CD4-positive, alpha-beta T cell (primary cell): ENCODE measurements at regions of chr11 and their contacts with region 1.

Region 1: DNA sequence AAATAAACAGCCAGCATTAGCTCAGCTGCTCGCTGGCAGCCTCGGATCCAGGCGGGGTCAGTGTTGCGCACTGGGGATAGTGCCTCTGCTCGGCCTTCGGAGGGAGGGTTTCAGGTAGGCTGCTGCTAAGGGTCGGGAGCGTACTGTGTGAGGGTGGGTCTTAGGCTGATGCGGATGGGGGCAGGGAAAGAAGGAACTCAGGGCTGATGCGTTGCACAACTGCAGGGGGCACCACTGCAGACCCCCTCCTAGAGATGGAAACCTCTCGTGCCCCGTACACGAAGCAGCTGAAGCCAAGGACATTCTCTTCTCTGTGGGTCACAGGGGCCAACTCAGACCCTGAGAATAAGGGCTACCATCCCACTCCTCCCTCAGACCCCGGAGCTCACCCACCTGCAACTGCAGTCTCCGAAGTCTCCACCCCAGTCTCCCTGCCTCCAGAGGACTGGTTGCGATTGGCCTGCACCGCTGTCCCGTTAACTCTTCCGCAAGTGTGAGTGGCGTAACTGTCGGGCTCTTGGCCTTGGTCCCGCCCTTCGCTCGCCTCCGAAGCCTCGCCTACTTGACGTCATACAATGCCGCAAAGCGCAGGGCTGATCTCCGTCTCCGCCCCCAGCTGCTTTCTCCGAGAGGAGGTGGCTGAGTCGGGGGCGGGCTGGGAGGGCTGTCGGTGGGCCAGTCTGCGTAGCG is at the start of gene KBTBD3:
- DNase-seq: peak; percentile 95 to 100 (median 98)
- ATAC-seq: peak; percentile 91
- H3K4me3 ChIP-seq: peak within 1 kb of the TSS; percentile 70
- H3K4me3 Mint-ChIP-seq: peak within 1 kb of the TSS; percentile 94
- H3K27ac ChIP-seq: peak within 1 kb of the TSS; percentile 82 to 94
- H3K27ac Mint-ChIP-seq: peak within 1 kb of the TSS; percentile 92
- H3K4me1 ChIP-seq: peaks cover 15% of the 10 kb centered on the region
- H3K4me1 Mint-ChIP-seq: peaks cover 73% of the 10 kb centered on the region
- H3K27me3 ChIP-seq: no peaks in the 10 kb centered on the region
- H3K27me3 Mint-ChIP-seq: no peaks in the 10 kb centered on the region
- CTCF ChIP-seq: peak; percentile 66
- total RNA-seq, gene KBTBD3: 5.7 to 8.1 TPM

Region 2: GRCh38 chr11:106021967-106022794 is 54.9 kb before region 1 on chr11 and contains the start of gene MSANTD4:
- CTCF ChIA-PET with region 1: interaction called, 3 read pairs
- POLR2A ChIA-PET with region 1: interaction called, 5 read pairs
- intact Hi-C with region 1: loop called (anchors 1 to 2 kb)
- DNase-seq: peak; percentile 91 to 98 (median 95)
- ATAC-seq: peak; percentile 96
- H3K4me3 ChIP-seq: peak within 1 kb of the TSS; percentile 85
- H3K4me3 Mint-ChIP-seq: peak within 1 kb of the TSS; percentile 94
- H3K27ac ChIP-seq: peak within 1 kb of the TSS; percentile 3 to 42
- H3K27ac Mint-ChIP-seq: peak within 1 kb of the TSS; percentile 71
- H3K4me1 ChIP-seq: peaks cover 7% of the 10 kb centered on the region
- H3K4me1 Mint-ChIP-seq: peaks cover 49% of the 10 kb centered on the region
- H3K27me3 ChIP-seq: no peaks in the 10 kb centered on the region
- H3K27me3 Mint-ChIP-seq: peaks cover 12% of the 10 kb centered on the region
- CTCF ChIP-seq: no peak
- total RNA-seq, gene MSANTD4: 4.3 to 6.2 TPM

Region 3: DNA sequence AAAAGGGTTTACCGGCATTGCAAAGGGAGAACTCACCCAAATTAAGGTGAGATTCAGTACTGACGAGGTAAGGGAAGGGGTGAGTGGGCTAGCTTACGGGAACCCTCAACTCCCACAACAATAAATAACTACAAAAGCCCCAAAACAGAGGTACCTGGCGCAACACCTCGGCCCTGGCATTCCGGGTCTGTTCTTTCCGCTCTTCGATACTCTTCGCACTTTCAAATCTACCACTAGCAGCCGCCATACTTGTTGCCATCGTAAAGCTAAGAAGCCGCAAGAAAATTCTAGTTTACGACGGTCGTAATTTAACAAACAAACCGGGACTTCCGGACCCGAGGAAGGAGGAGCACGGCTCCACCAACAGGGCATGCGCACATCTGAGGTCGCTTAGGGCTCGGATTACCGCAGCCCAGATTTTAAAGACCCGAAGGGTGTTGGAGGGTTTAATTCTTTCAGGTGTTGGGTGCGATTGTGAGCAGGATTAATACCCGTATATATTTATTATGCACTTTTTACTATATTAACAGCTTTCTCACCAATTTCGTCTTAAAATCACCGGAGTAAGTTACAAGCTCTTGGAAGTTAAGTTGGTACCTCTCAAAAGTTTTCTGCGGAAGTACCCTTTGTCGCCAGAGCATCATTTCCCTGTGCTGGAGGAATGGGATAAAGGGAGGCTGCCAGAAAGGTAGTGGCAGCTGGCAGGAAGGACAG is 1380.7 kb after region 1 on chr11 and contains the start of gene CWF19L2:
- CTCF ChIA-PET with region 1: interaction called, 4 read pairs
- POLR2A ChIA-PET with region 1: interaction called, 8 read pairs
- intact Hi-C with region 1: loop called (anchors 5 to 10 kb)
- DNase-seq: peak; percentile 74 to 97 (median 86)
- ATAC-seq: peak; percentile 92
- H3K4me3 ChIP-seq: peak within 1 kb of the TSS; percentile 92
- H3K4me3 Mint-ChIP-seq: peak within 1 kb of the TSS; percentile 91
- H3K27ac ChIP-seq: peak within 1 kb of the TSS; percentile 73 to 79
- H3K27ac Mint-ChIP-seq: peak within 1 kb of the TSS; percentile 82
- H3K4me1 ChIP-seq: peaks cover 7% of the 10 kb centered on the region
- H3K4me1 Mint-ChIP-seq: peaks cover 37% of the 10 kb centered on the region
- H3K27me3 ChIP-seq: no peaks in the 10 kb centered on the region
- H3K27me3 Mint-ChIP-seq: peaks cover 5% of the 10 kb centered on the region
- CTCF ChIP-seq: no peak
- total RNA-seq, gene CWF19L2: 21.2 to 21.8 TPM